Heart right ventricle (tissue), 16 donors: ENCODE measurements at regions of chr20 and their contacts with region 1.

Region 1: GRCh38 chr20:47730744-47731143 is 54.5 kb downstream of the SULF2 start:
- DNase-seq: no peak
- ATAC-seq: no peak
- H3K4me3 ChIP-seq: no peak overlapping the region
- H3K27ac ChIP-seq: no peak overlapping the region
- H3K4me1 ChIP-seq: peaks cover 0 to 35% (median 5%) of the 10 kb centered on the region in 9 donors
- H3K27me3 ChIP-seq: no peaks in the 10 kb centered on the region
- CTCF ChIP-seq: no peak

Region 2: DNA sequence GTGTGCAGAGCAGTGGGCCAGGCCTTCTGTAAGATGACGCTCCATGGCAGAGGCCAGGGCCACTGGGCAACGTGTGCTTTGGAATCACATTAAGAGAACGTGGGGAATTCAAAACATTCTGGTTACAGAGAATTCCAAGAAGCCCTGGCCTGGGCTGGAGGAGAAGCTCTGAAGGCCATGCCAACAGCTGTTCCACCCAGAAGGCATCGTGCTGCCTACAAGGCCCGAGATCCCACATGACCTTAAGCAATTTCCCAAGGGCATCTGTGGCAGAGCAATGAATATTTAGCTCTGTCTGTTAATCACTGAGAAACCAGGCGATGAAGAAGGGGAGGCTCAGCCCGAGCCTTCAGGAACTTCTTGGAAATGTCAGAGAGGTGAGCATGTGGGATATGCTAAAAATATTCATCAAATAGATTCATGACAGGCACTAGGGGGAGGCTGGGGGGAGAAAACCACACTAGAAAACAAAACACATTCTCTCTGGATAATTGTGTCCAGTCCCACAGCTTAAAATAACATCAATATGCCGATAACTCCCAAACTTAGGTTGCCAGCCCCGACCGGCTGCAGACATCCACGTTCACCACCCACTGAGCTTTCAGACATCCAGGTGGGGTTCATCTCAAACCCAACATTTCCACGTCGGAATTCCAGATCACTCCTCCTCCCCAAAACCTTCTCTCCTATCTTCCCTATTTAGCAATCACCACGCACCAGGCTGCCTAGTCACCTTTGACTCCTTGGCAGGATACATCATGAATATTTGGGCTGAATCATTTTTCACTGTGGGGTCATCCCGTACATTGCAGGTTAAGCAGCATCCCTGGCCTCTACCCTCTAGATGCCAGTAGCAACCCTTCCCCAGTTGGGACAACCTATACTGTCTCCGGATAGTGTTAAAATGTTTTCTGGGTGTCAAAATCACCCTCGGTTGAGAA is 47.9 kb after region 1 on chr20:
- intact Hi-C with region 1: loop called in 7 of 10 experiments (anchors 2 to 10 kb)
- DNase-seq: no peak
- ATAC-seq: no peak
- H3K4me3 ChIP-seq: no peak overlapping the region
- H3K27ac ChIP-seq: no peak overlapping the region
- H3K4me1 ChIP-seq: peaks cover 0 to 74% (median 29%) of the 10 kb centered on the region in 9 donors
- H3K27me3 ChIP-seq: peaks cover 0 to 35% (median 2%) of the 10 kb centered on the region in 7 donors
- CTCF ChIP-seq: no peak

Region 3: DNA sequence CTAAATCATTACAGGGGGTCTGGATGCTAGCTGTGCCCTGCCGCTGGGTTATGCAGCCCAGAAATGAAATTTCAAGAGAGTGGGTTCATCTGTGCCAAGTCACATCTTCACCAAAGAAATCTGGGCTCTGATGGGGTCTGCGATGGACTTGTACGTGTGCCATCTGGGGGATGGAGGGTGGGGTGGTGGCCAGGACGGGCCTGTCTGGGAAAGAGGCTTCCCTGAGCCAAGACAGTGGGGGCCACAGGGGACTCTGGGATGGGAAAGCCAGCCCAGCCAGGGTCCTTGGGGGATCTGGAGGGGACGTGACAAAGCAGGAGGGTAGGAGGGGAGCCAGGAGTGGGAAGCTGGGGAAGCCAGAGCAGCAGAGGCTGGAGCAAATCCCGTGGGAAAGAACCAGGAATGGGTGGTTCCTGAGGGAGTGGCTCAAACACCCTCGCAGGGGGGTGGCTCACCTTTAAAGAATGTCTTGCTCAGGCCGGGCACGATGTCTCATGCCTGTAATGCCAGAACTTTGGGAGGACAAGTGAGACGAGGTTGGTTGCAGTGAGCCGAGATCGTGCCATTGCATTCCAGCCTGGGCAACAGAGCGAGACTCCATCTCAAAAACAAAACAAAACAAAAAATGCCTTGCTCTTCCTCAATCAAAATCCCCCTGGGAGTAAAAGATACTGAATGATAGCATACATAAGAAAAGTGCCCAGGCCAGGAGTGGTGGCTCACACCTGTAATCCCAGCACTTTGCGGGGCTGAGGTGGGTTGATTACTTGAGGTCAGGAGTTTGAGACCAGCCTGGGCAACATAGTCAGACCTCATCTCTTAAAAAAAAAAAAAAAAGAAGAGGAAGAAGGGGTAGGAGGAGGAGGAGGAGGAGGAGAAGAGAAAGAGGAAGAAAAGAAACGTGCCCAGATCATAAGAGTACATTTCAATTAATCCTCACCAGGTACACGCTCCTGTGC is 91.0 kb after region 1 on chr20:
- intact Hi-C with region 1: no loop called
- DNase-seq: no peak
- ATAC-seq: no peak
- H3K4me3 ChIP-seq: no peak overlapping the region
- H3K27ac ChIP-seq: no peak overlapping the region
- H3K4me1 ChIP-seq: no peaks in the 10 kb centered on the region
- H3K27me3 ChIP-seq: peaks cover 0 to 68% (median 50%) of the 10 kb centered on the region in 7 donors
- CTCF ChIP-seq: no peak